ENCODE measurements at regions of chr6 and their contacts with region 1.

Region 1: DNA sequence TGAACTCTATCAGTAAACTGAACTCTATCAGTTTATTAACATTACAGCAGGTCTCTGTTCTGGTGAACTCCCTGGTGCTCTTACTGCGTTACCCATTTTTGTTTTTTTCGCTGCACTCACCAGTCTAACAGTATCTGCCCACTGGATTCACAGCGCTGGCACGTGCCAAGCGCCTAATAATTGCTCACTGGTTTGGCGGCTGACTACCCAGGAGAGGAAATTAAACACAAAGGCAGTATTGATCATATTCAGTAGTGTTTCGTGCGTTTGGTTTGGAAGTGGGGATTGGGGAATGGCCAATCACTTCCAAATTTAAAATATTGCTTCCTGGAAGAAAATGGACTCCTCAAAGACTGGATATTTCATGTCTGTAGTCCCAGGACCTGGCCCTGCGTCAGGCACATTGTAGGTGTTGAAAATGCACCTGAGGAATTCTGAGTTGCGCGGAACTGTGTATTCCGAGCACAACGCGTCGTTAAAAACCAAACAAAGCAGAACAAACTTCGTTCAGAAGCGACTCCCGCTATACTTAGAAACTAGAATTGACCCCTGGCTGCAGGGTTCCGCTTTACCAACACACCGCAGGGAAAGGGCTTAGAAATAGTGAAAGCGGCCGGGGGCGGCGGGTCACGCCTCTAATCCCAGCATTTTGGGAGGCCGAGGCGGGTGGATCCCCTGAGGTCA is 1.1 kb upstream of the RPS12 start:
- DNase-seq: peak; percentile 33
- ATAC-seq: peak; percentile 2; the same call in 1 of the 2 replicates
- H3K4me3 Mint-ChIP-seq: peak overlapping the region; percentile 99
- H3K27ac Mint-ChIP-seq: peak overlapping the region; percentile 98
- H3K4me1 Mint-ChIP-seq: peaks cover 37% of the 10 kb centered on the region
- H3K27me3 Mint-ChIP-seq: peaks cover 4% of the 10 kb centered on the region; the same call in 1 of the 2 replicates
- CTCF ChIP-seq: no peak

Region 2: GRCh38 chr6:132798869-132799538 is 14.3 kb before region 1 on chr6:
- CTCF ChIA-PET with region 1: interaction called, 30 read pairs
- POLR2A ChIA-PET with region 1: interaction called, 17 read pairs
- DNase-seq: peak; percentile 73
- ATAC-seq: peak; percentile 90
- H3K4me3 Mint-ChIP-seq: peak overlapping the region; percentile 91; the same call in 1 of the 2 replicates
- H3K27ac Mint-ChIP-seq: no peak overlapping the region; the same call in 1 of the 2 replicates
- H3K4me1 Mint-ChIP-seq: peaks cover 7% of the 10 kb centered on the region
- H3K27me3 Mint-ChIP-seq: no peaks in the 10 kb centered on the region
- CTCF ChIP-seq: peak; percentile 17; the same call in 1 of the 2 replicates